WTC11 (cell line): ENCODE measurements at regions of chr22 and their contacts with region 1.

Region 1: DNA sequence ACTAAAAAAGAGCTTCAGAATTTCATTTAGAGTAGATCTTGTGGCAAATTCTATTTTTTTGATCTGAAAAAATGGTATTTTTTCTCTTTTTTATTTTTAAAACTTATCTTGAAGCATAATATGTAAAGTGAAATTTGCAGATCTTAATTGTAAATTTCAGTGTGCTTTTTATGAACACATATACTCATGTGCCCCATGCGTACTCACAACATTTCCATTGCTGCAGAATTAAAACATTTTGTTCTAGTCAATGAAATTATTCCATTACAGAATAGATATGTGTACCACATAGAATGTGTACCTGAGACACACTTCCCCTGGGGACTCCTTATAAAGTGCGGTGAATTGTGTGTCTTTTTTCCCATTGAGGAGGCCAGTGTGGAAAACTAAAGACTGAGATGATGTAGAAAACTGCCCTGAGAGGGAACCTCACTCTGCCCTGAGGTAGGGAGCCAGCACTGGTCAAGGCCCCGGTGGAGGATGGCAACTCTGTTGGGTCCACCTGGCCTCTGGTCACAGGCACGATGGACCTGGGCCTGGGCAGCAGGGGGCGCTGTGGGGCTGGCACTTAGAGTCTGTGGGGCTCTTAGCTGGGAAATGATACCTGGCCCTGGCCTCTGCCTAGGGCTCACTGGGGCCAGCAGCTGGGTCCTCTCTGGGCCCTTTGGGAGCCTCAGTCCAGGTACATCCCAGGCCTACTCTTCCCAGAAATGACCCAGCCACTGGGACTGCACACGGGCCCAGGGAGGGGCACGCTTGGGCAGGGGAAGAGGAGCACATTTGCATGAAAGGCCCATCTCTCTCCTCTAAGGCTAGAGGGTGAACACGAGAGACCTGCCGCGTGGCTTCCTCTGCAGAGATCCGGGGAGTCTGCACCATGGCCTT is 77.9 kb upstream of the TOP3B start:
- DNase-seq: peak; percentile 93
- ATAC-seq: peak; percentile 97
- H3K4me3 Mint-ChIP-seq: no peak overlapping the region
- H3K27ac Mint-ChIP-seq: no peak overlapping the region
- H3K4me1 Mint-ChIP-seq: peaks cover 9% of the 10 kb centered on the region
- H3K27me3 Mint-ChIP-seq: peaks cover 100% of the 10 kb centered on the region
- CTCF ChIP-seq: peak; percentile 94

Region 2: DNA sequence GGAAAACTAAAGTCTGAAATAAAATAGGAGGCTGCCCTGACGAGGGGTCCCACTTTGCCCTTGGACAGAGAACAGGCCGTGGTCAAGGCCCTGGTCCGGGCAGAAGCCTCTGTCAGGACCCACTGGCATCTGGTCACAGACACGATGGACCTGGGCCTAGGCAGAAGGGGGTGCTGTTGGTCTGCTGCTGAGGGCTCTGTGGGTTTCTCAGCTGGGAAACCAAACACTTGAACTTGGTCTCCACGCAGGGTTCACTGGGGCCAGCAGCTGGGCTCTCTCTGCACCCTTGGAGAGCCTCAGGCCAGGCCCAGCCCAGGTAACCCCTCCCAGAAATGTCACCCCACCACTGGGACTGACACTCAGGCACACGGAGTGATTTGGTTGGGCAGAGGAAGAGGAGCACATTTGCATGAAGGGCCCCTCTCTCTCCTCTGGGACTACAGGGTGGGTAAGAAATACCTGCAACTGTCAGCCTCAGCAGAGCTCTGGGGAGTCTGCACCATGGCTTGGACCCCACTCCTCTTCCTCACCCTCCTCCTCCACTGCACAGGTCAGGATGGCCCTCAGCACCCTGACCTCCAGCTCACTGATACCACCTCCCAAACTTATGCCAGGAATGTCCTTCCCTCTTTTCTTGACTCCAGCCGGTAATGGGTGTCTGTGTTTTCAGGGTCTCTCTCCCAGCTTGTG is 29.8 kb before region 1 on chr22:
- CTCF ChIA-PET with region 1: interaction called, 25 read pairs
- POLR2A ChIA-PET with region 1: no interaction called
- DNase-seq: peak; percentile 51
- ATAC-seq: peak; percentile 76
- H3K4me3 Mint-ChIP-seq: no peak overlapping the region
- H3K27ac Mint-ChIP-seq: no peak overlapping the region
- H3K4me1 Mint-ChIP-seq: peaks cover 11% of the 10 kb centered on the region
- H3K27me3 Mint-ChIP-seq: peaks cover 96% of the 10 kb centered on the region
- CTCF ChIP-seq: no peak

Region 3: GRCh38 chr22:22048981-22049531 is 11.4 kb before region 1 on chr22:
- CTCF ChIA-PET with region 1: interaction called, 29 read pairs
- POLR2A ChIA-PET with region 1: no interaction called
- DNase-seq: no peak
- ATAC-seq: no peak; the same call in 1 of the 2 replicates
- H3K4me3 Mint-ChIP-seq: no peak overlapping the region
- H3K27ac Mint-ChIP-seq: no peak overlapping the region
- H3K4me1 Mint-ChIP-seq: no peaks in the 10 kb centered on the region
- H3K27me3 Mint-ChIP-seq: peaks cover 84% of the 10 kb centered on the region
- CTCF ChIP-seq: no peak

Region 4: GRCh38 chr22:22110548-22111266 is 50.3 kb after region 1 on chr22:
- CTCF ChIA-PET with region 1: interaction called, 14 read pairs
- POLR2A ChIA-PET with region 1: no interaction called
- DNase-seq: peak; percentile 63
- ATAC-seq: peak; percentile 96
- H3K4me3 Mint-ChIP-seq: no peak overlapping the region
- H3K27ac Mint-ChIP-seq: no peak overlapping the region
- H3K4me1 Mint-ChIP-seq: peaks cover 10% of the 10 kb centered on the region
- H3K27me3 Mint-ChIP-seq: peaks cover 85% of the 10 kb centered on the region
- CTCF ChIP-seq: peak; percentile 33

Region 5: GRCh38 chr22:22235558-22235957 is 175.1 kb after region 1 on chr22:
- CTCF ChIA-PET with region 1: interaction called, 14 read pairs
- POLR2A ChIA-PET with region 1: no interaction called
- DNase-seq: peak; percentile 57
- ATAC-seq: no peak
- H3K4me3 Mint-ChIP-seq: no peak overlapping the region
- H3K27ac Mint-ChIP-seq: no peak overlapping the region
- H3K4me1 Mint-ChIP-seq: no peaks in the 10 kb centered on the region
- H3K27me3 Mint-ChIP-seq: peaks cover 100% of the 10 kb centered on the region
- CTCF ChIP-seq: peak; percentile 44